ENCODE measurements at regions of chr6 and their contacts with region 1.

Region 1: GRCh38 chr6:22059946-22060345 is 236.9 kb downstream of the PRL start:
- DNase-seq: no peak
- H3K4me3 ChIP-seq: no peak overlapping the region
- H3K27ac ChIP-seq: no peak overlapping the region
- H3K4me1 ChIP-seq: peaks cover 6% of the 10 kb centered on the region
- H3K27me3 ChIP-seq: no peaks in the 10 kb centered on the region
- CTCF ChIP-seq: no peak

Region 2: GRCh38 chr6:22113026-22113766 is 53.2 kb after region 1 on chr6:
- CTCF ChIA-PET with region 1: no interaction called
- dilution Hi-C with region 1: no loop called
- in situ Hi-C with region 1: no loop called
- intact Hi-C with region 1: loop called (anchors 2 kb)
- DNase-seq: peak; percentile 97
- H3K4me3 ChIP-seq: no peak overlapping the region
- H3K27ac ChIP-seq: no peak overlapping the region
- H3K4me1 ChIP-seq: peaks cover 4% of the 10 kb centered on the region
- H3K27me3 ChIP-seq: no peaks in the 10 kb centered on the region
- CTCF ChIP-seq: no peak

Measured in mammary epithelial cell (primary cell).